Naive thymus-derived CD4-positive, alpha-beta T cell (primary cell): ENCODE measurements at regions of chr7 and their contacts with region 1.

Region 1: DNA sequence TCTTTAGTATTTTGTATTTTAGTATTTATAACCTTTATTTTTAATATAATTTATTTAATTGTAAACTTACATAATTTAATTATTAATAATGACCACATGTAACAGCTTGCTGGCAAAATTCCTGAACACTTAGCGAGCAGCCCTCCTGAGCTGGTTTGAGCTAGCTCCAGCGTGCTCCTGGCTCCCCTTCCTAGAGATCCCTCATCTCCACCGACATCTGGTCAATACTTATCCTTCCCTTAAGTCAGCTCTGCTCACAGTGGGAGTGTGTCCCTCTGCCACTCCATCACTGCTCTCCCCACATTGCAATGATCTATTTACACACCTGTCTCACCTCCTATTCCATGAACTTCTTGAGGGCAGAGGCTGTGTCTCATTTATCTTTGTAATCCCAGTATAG is 20.6 kb upstream of the TBXAS1 start:
- DNase-seq: no peak
- ATAC-seq: no peak
- H3K4me3 ChIP-seq: no peak overlapping the region
- H3K4me3 Mint-ChIP-seq: no peak overlapping the region
- H3K27ac ChIP-seq: no peak overlapping the region
- H3K27ac Mint-ChIP-seq: no peak overlapping the region
- H3K4me1 ChIP-seq: no peaks in the 10 kb centered on the region
- H3K4me1 Mint-ChIP-seq: peaks cover 0 to 10% (median under 1%) of the 10 kb centered on the region in 7 donors
- H3K27me3 ChIP-seq: no peaks in the 10 kb centered on the region
- H3K27me3 Mint-ChIP-seq: peaks cover 0 to 16% (median 2%) of the 10 kb centered on the region in 5 donors

Region 2: GRCh38 chr7:139958599-139959297 is 150.3 kb after region 1 on chr7:
- CTCF ChIA-PET with region 1: no interaction called
- POLR2A ChIA-PET with region 1: no interaction called
- intact Hi-C with region 1: loop called in 1 of 2 experiments (anchors 10 kb)
- DNase-seq: no peak
- ATAC-seq: no peak
- H3K4me3 ChIP-seq: no peak overlapping the region
- H3K4me3 Mint-ChIP-seq: no peak overlapping the region
- H3K27ac ChIP-seq: no peak overlapping the region
- H3K27ac Mint-ChIP-seq: no peak overlapping the region
- H3K4me1 ChIP-seq: no peaks in the 10 kb centered on the region
- H3K4me1 Mint-ChIP-seq: no peaks in the 10 kb centered on the region
- H3K27me3 ChIP-seq: no peaks in the 10 kb centered on the region
- H3K27me3 Mint-ChIP-seq: no peaks in the 10 kb centered on the region